Activated naive CD4-positive, alpha-beta T cell treated with anti-CD3 and anti-CD28 coated beads for 36 hours (primary cell): ENCODE measurements at regions of chr3 and their contacts with region 1.

Region 1: DNA sequence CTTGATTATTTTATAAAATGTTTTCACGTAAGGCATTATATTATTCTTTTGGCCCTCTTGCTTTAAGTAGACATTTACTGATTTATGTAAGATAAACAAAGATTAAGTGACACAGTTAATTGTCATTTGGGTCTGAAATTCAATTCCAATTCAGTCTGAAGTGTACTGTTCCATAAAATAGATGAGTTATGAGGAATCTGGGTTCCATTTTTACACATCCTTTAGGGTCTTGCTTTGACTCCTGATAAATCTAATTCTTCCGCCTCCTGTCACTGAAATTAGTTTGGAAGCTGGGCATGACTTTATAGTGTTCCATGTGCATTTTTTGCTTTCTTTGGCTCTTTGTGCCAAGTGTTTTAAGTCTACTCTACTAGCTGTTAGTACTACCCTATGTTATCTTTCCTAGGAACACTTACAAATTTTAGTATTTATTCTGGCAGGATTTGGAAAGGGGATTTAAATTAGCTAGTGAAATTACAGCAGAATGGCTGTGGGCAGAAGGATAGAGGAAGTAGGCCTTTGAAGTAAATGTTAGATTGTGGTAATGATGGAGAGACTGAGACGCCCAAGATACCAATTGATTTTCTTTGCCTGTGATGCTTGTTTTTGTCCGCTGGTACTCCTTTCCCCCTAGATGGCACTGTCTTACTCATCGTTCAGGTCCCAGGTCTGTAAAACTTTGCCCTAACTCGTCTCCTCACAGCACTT is 14.3 kb downstream of the ARL8B start:
- DNase-seq: peak; percentile 51
- H3K4me3 Mint-ChIP-seq: no peak overlapping the region
- H3K27ac Mint-ChIP-seq: peak overlapping the region; percentile 66
- H3K4me1 Mint-ChIP-seq: peaks cover 68% of the 10 kb centered on the region
- H3K27me3 Mint-ChIP-seq: no peaks in the 10 kb centered on the region

Region 2: DNA sequence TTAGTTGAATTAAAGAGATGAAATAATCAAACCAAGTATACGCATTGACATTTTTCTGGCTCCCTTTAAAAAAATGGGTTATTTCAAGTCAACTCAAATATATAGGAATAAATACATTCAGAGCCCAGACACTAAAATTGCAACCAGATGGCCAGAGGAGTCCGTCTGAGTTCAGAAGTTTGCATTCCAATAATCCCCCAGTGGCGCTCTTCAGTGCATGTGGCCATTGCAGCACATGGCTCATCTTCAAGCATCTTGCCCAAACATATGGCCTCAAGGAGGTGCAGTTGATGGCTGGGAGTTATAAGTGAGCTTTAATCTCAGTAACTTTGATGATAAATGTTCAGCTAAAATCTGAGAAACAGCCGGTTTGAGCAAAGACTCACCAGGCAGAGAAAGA is 1633.0 kb before region 1 on chr3:
- CTCF ChIA-PET with region 1: no interaction called
- intact Hi-C with region 1: no loop called
- DNase-seq: no peak
- H3K4me3 Mint-ChIP-seq: no peak overlapping the region
- H3K27ac Mint-ChIP-seq: no peak overlapping the region
- H3K4me1 Mint-ChIP-seq: no peaks in the 10 kb centered on the region
- H3K27me3 Mint-ChIP-seq: no peaks in the 10 kb centered on the region

Region 3: GRCh38 chr3:3531476-3531875 is 1604.9 kb before region 1 on chr3:
- CTCF ChIA-PET with region 1: no interaction called
- intact Hi-C with region 1: no loop called
- DNase-seq: no peak
- H3K4me3 Mint-ChIP-seq: no peak overlapping the region
- H3K27ac Mint-ChIP-seq: no peak overlapping the region
- H3K4me1 Mint-ChIP-seq: peaks cover 3% of the 10 kb centered on the region
- H3K27me3 Mint-ChIP-seq: peaks cover 2% of the 10 kb centered on the region

Region 4: GRCh38 chr3:5122030-5122740 is 14.2 kb before region 1 on chr3 and contains the start of gene ARL8B:
- CTCF ChIA-PET with region 1: interaction called, 20 read pairs
- intact Hi-C with region 1: no loop called
- DNase-seq: peak; percentile 94
- H3K4me3 Mint-ChIP-seq: peak within 1 kb of the TSS; percentile 90
- H3K27ac Mint-ChIP-seq: peak within 1 kb of the TSS; percentile 90
- H3K4me1 Mint-ChIP-seq: peaks cover 39% of the 10 kb centered on the region
- H3K27me3 Mint-ChIP-seq: no peaks in the 10 kb centered on the region
- total RNA-seq, gene ARL8B: 38.4 to 39.3 TPM

Region 5: DNA sequence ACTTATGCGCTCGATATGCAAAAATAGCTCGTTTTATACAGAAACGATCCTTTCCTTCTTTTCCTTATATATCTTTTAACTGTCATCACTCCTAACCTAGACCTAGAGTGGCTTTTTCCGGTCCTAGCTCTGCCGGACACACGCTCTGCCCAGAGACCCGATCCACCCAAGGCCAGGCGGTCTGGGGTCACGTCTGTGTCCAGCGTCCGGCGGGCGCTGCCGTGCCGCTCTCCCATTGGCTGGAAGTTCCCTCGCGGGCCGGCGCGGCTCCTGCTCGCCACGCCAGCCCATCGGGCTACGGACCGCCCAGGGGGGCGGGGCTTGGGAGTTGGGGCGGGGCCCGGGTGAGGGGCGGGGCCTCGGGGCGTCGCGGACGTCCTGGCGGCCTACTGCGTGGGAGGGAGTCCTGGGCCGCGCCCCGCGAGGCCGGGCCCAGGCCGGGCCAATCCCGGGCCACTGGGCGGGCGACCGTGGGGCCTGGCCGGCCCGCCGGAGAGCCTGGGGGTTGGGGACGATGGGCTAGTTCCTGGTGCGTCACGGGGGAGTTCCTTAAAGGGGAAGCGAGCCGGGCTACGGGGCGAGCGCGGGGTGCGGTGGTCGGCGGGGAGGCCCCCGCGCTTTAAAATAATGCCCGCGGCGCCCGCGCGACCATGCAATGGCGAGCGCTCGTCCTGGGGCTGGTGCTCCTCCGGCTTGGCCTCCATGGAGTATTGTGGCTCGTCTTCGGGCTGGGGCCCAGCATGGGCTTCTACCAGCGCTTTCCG is 51.0 kb after region 1 on chr3 and contains the start of gene EDEM1:
- CTCF ChIA-PET with region 1: interaction called, 8 read pairs
- intact Hi-C with region 1: loop called (anchors 1 kb)
- DNase-seq: peak; percentile 95
- H3K4me3 Mint-ChIP-seq: peak within 1 kb of the TSS; percentile 96
- H3K27ac Mint-ChIP-seq: peak within 1 kb of the TSS; percentile 99
- H3K4me1 Mint-ChIP-seq: peaks cover 27% of the 10 kb centered on the region
- H3K27me3 Mint-ChIP-seq: no peaks in the 10 kb centered on the region
- total RNA-seq, gene EDEM1: 137 to 138 TPM

Region 6: GRCh38 chr3:5232570-5232969 is 96.2 kb after region 1 on chr3:
- CTCF ChIA-PET with region 1: interaction called, 5 read pairs
- intact Hi-C with region 1: loop called (anchors 1 kb)
- DNase-seq: peak; percentile 14
- H3K4me3 Mint-ChIP-seq: no peak overlapping the region
- H3K27ac Mint-ChIP-seq: no peak overlapping the region
- H3K4me1 Mint-ChIP-seq: no peaks in the 10 kb centered on the region
- H3K27me3 Mint-ChIP-seq: peaks cover 3% of the 10 kb centered on the region

Region 7: DNA sequence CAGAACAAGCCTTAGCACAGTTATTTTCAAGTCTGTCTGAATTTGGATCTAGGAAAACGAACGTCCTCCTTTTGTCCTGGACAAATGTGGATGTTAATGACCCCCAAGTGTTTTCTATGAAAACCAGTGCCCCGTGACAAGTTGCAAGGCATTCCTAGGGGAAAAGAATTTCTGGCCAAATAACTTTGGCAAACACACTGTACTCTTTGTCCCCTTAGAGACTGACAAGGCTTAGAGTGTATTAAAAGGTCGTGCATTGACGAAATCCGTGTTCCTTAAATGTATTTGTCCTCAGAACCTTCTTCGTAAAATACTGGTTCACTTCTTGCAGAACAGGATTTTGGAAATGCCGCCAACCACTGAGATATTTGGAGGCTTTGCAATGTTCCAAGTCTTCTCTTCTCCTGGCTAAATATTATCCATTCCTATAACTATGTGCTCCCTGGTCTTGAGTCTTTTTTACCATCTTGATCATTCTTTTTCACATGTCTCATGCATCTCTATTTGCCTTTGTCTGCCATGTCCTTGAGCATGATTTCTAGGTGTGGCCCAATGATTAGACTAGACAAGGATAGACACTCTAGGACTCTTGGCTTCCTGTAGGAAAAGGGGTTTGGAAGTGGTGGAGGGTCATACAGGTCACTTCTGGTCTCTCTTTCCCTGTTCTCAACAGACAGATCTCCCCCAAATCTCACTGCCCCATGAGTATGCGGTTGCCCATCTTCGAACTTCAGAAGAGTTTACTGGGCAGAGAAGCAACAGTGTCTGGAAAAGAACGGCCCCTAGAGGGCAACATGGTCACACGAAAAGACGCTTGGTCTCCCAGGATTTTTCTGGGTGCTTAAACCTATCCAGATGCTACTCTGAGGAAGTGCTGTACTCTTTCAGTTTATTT is 168.7 kb after region 1 on chr3:
- CTCF ChIA-PET with region 1: no interaction called
- intact Hi-C with region 1: loop called (anchors 2 kb)
- DNase-seq: peak; percentile 70
- H3K4me3 Mint-ChIP-seq: no peak overlapping the region
- H3K27ac Mint-ChIP-seq: no peak overlapping the region
- H3K4me1 Mint-ChIP-seq: no peaks in the 10 kb centered on the region
- H3K27me3 Mint-ChIP-seq: no peaks in the 10 kb centered on the region